ENCODE measurements at regions of chr7 and their contacts with region 1.

Region 1: DNA sequence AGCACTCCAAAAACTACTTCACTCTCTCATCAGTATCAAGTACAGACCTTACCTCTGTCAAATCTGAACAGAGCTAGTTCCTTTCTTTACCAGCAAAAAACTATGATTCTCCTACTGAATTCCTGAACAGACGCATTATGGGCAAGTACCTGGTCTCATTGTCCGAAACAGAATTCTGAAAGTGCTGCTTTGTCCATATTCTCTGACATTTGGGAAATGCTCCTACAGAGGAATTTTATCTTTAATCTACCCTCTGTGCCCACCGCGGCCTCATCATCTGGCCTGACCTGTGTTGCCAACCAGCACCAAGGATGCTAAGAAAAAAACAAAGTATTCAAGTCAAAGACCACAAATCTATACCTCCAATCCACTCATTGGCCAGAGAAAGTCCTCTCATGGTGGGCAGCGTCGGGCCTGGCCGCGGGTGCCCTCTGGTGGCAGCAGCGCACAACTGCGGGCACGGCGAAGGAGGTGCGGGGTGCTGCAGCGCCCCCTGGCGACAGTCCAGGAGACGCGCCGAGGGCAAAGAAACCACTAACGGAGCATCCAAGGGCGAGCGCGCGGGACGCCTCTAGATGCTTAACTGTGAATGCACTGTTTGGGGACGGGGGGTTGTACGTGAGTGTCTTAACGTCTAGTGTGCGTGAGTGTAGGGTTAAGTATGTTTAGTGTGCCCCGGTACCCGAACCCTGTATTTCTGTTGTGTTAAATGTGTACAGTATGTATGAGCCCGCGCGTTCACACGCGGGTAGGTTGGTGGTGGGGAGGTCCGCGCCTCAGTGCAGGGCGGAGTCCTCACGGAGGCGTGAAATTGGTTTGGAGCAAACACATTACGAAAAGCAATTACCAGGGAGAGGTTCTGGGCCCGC is 5.0 kb upstream of the GBX1 start:
- DNase-seq: peak; percentile 93

Region 2: DNA sequence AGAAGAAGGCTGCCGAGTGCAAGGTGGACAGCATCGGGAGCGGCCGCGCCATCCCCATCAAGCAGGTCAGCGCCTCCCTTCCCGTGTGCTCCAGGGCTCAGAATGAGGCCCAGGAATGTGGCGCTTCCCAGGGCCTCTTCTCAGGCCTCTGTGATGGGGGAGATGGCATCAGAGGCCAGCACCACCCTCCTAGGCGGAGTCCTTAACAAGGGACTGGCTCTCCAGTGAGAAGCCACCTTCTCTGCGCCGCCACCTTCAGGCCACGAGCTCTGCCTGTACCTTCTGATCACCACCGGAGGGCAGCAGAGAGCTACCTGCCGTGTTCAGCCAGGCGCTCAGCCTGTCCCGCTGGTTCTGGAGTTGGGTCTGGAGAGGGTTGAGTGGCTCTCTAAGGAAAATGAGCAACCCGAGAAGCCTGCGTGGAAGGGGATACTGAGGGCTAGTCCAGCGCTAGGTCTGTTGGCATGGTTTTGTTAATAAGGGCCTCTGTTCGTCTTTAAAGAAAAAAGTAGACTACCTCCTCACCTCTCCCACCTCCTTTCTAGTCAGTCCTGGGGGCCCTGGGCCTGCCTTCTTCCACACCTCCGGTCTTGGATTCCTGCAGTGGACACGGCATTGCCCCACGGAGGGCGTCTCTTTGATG is 48.6 kb before region 1 on chr7:
- intact Hi-C with region 1: loop called (anchors 1 kb)
- DNase-seq: peak; percentile 92

Region 3: GRCh38 chr7:151244196-151244840 is 71.8 kb after region 1 on chr7:
- intact Hi-C with region 1: loop called (anchors 5 kb)
- DNase-seq: no peak

Region 4: DNA sequence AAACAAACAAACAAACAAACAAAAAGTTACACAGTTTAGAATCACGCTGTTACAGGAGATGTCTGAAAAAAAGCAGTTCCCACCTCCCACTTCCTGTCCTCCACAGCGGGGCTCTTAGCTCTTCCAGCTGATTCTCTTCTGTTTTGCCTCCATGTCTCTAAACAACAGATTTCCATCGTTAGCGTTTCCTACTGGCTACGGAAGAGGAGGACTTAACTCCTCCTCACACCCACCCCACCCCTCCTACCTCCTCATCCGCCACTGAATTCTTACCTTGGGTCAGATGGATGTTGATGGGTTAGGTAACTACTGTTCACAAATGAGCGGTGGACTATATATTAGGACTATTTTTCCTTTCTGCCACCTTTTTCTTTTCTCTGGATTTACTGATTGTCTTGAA is 132.3 kb after region 1 on chr7:
- intact Hi-C with region 1: loop called (anchors 5 kb)
- DNase-seq: no peak

Region 5: GRCh38 chr7:151491859-151492258 is 319.4 kb after region 1 on chr7:
- intact Hi-C with region 1: no loop called
- DNase-seq: no peak